ENCODE measurements at regions of chr15 and their contacts with region 1.

Region 1: DNA sequence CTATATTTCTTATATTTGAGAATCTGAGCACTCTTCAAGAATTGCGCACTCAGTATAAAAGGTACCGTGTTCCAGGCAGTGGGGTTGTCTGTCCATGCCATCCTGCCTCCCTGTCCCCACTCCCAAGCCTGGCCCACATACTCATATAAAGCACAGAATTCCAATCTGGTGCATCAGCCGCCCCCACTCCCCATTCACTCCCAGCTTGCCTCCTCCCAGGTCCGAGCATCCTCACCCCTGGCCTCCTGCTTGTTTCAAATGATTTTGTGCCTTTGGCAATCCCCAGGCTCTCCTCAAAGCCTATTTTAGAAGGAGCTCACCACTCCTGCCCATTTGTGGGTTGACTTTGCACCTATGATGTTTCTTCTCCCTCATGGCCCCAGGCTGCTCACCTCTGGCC is 22.2 kb upstream of the IGF1R start:
- DNase-seq: no peak
- H3K4me3 ChIP-seq: no peak overlapping the region
- H3K4me3 Mint-ChIP-seq: no peak overlapping the region
- H3K27ac Mint-ChIP-seq: no peak overlapping the region
- H3K4me1 ChIP-seq: peaks cover 6% of the 10 kb centered on the region; the same call in 1 of the 2 replicates
- H3K4me1 Mint-ChIP-seq: no peaks in the 10 kb centered on the region
- H3K27me3 ChIP-seq: no peaks in the 10 kb centered on the region
- H3K27me3 Mint-ChIP-seq: peaks cover 29% of the 10 kb centered on the region
- CTCF ChIP-seq: no peak

Region 2: GRCh38 chr15:98525661-98526001 is 100.5 kb before region 1 on chr15:
- CTCF ChIA-PET with region 1: no interaction called
- POLR2A ChIA-PET with region 1: no interaction called
- intact Hi-C with region 1: no loop called
- DNase-seq: no peak
- H3K4me3 ChIP-seq: no peak overlapping the region
- H3K4me3 Mint-ChIP-seq: no peak overlapping the region
- H3K27ac Mint-ChIP-seq: no peak overlapping the region
- H3K4me1 ChIP-seq: no peaks in the 10 kb centered on the region
- H3K4me1 Mint-ChIP-seq: no peaks in the 10 kb centered on the region
- H3K27me3 ChIP-seq: no peaks in the 10 kb centered on the region
- H3K27me3 Mint-ChIP-seq: peaks cover 9% of the 10 kb centered on the region
- CTCF ChIP-seq: no peak

Region 3: DNA sequence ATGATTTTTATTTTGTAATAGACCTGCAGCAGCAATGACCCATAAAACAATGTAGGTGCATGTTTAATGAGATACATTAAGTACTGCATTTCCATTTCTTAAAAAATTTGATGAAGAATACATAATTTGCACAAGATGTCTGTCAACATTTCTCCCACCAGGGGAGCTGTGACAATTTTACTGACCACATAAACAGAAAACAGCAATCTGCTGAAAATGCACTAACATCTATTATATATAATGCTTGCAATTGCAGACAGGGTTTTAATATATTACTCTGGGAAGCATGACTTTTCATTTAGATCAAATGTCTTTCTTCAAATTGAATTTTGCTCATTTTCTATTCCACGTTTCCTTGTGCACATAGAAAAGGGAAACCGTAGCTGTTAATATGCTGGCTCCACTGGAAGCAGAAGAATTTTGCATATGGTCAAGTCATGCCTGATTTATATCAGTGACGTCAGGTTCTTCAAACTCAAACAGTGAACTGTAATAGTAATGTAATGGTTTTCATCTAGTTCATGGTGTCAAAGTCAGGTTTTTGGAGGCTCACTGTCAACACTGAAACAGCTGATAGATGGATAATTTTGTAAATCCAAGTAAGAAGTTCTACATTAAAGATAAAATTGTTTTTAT is 57.7 kb before region 1 on chr15:
- CTCF ChIA-PET with region 1: no interaction called
- POLR2A ChIA-PET with region 1: interaction called, 10 read pairs
- intact Hi-C with region 1: no loop called
- DNase-seq: no peak
- H3K4me3 ChIP-seq: no peak overlapping the region
- H3K4me3 Mint-ChIP-seq: no peak overlapping the region
- H3K27ac Mint-ChIP-seq: no peak overlapping the region
- H3K4me1 ChIP-seq: no peaks in the 10 kb centered on the region
- H3K4me1 Mint-ChIP-seq: no peaks in the 10 kb centered on the region
- H3K27me3 ChIP-seq: no peaks in the 10 kb centered on the region
- H3K27me3 Mint-ChIP-seq: peaks cover 16% of the 10 kb centered on the region
- CTCF ChIP-seq: peak; percentile 50 to 80